Dorsolateral prefrontal cortex (tissue), 120 donors: ENCODE measurements at regions of chr10 and their contacts with region 1.

Region 1: GRCh38 chr10:119207367-119207668 is at the start of gene GRK5:
- DNase-seq: peak; percentile 84 to 96 (median 92)
- H3K4me3 ChIP-seq: peak within 1 kb of the TSS; percentile 57 to 94 (median 84)
- H3K27ac ChIP-seq: peak within 1 kb of the TSS; percentile 55 to 99 (median 95)
- H3K27me3 ChIP-seq: no peaks in the 10 kb centered on the region
- CTCF ChIP-seq: peak in 3 of 56 donors; percentile 8 to 32 (median 12)
- total RNA-seq, gene GRK5: 5.5 to 27.8 (median 14.1) TPM

Region 2: DNA sequence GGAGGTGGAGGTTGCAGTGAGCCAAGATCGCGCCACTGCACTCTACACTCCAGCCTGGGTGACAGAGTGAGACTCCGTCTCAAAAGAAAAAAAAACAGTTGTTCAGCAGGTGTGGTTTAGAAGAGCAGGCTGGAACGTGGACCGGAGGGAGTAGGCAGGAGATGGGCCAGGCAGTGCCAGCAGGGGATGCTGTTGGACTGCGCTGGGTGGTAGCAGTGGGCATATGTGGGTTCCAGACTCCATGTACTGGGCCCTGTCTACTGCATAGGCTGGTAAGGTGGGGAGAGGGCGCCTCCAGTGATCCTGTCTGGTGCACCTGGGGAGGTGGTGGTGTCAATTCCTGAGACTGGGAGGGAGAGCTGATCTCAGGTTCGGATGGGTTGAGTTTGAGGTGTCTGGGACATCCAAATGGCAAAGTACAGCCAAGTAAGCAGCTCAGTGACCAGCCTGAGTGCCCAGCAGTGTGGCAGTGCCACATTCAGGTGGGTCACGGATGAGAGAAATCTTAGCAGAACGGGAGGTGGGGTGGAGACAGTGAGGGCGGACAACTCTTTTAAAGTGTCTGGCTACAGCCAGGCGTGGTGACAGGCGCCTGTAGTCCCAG is 67.8 kb before region 1 on chr10:
- intact Hi-C with region 1: loop called in 1 of 2 experiments (anchors 2 kb)
- DNase-seq: peak in 5 of 10 donors; percentile 28 to 54 (median 43)
- H3K4me3 ChIP-seq: no peak overlapping the region
- H3K27ac ChIP-seq: peak overlapping the region in 6 of 59 donors; percentile 9 to 51 (median 18)
- H3K27me3 ChIP-seq: no peaks in the 10 kb centered on the region
- CTCF ChIP-seq: peak in 48 of 56 donors; percentile 11 to 61 (median 40)

Region 3: GRCh38 chr10:119149723-119150122 is 57.6 kb before region 1 on chr10:
- intact Hi-C with region 1: no loop called
- DNase-seq: peak in 1 of 10 donors; percentile 17
- H3K4me3 ChIP-seq: no peak overlapping the region
- H3K27ac ChIP-seq: no peak overlapping the region
- H3K27me3 ChIP-seq: no peaks in the 10 kb centered on the region
- CTCF ChIP-seq: no peak

Region 4: GRCh38 chr10:119178372-119179119 is 28.8 kb before region 1 on chr10 and contains the start of gene PRDX3:
- intact Hi-C with region 1: loop called (anchors 2 kb)
- DNase-seq: peak; percentile 84 to 94 (median 92)
- H3K4me3 ChIP-seq: peak within 1 kb of the TSS; percentile 62 to 93 (median 80)
- H3K27ac ChIP-seq: peak within 1 kb of the TSS in 58 of 59 donors; percentile 86 to 99 (median 97)
- H3K27me3 ChIP-seq: no peaks in the 10 kb centered on the region
- CTCF ChIP-seq: peak in 52 of 56 donors; percentile 12 to 74 (median 52)
- total RNA-seq, gene PRDX3: 62.3 to 112 (median 87.0) TPM

Region 5: GRCh38 chr10:119445311-119445934 is 238.1 kb after region 1 on chr10:
- intact Hi-C with region 1: loop called (anchors 1 to 2 kb)
- DNase-seq: peak; percentile 81 to 89 (median 86)
- H3K4me3 ChIP-seq: no peak overlapping the region
- H3K27ac ChIP-seq: no peak overlapping the region
- H3K27me3 ChIP-seq: no peaks in the 10 kb centered on the region
- CTCF ChIP-seq: peak; percentile 86 to 99 (median 95)

Region 6: GRCh38 chr10:119892188-119893065 is 685.1 kb after region 1 on chr10 and contains the start of gene SEC23IP:
- intact Hi-C with region 1: loop called (anchors 2 to 10 kb)
- DNase-seq: peak; percentile 98 to 100 (median 99)
- H3K4me3 ChIP-seq: peak within 1 kb of the TSS; percentile 64 to 100 (median 97)
- H3K27ac ChIP-seq: peak within 1 kb of the TSS; percentile 43 to 98 (median 90)
- H3K27me3 ChIP-seq: no peaks in the 10 kb centered on the region
- CTCF ChIP-seq: peak in 37 of 56 donors; percentile 1 to 59 (median 31)
- total RNA-seq, gene SEC23IP: 19.3 to 61.5 (median 35.0) TPM